MCF 10A (cell line): ENCODE measurements at regions of chr1 and their contacts with region 1.

Region 1: GRCh38 chr1:161201828-161202725 is at the start of gene NDUFS2:
- DNase-seq: peak; percentile 100
- H3K4me3 Mint-ChIP-seq: peak within 1 kb of the TSS; percentile 85
- H3K27ac Mint-ChIP-seq: peak within 1 kb of the TSS; percentile 96
- H3K4me1 Mint-ChIP-seq: peaks cover 66% of the 10 kb centered on the region
- H3K27me3 Mint-ChIP-seq: no peaks in the 10 kb centered on the region
- CTCF ChIP-seq: no peak
- total RNA-seq, gene NDUFS2: 139 and 149 TPM in 2 replicates

Region 2: GRCh38 chr1:160996178-160996577 is 205.9 kb before region 1 on chr1:
- CTCF ChIA-PET with region 1: no interaction called
- POLR2A ChIA-PET with region 1: no interaction called
- intact Hi-C with region 1: no loop called
- DNase-seq: peak; percentile 70
- H3K4me3 Mint-ChIP-seq: no peak overlapping the region
- H3K27ac Mint-ChIP-seq: peak overlapping the region; percentile 70
- H3K4me1 Mint-ChIP-seq: peaks cover 30% of the 10 kb centered on the region
- H3K27me3 Mint-ChIP-seq: no peaks in the 10 kb centered on the region
- CTCF ChIP-seq: no peak

Region 3: DNA sequence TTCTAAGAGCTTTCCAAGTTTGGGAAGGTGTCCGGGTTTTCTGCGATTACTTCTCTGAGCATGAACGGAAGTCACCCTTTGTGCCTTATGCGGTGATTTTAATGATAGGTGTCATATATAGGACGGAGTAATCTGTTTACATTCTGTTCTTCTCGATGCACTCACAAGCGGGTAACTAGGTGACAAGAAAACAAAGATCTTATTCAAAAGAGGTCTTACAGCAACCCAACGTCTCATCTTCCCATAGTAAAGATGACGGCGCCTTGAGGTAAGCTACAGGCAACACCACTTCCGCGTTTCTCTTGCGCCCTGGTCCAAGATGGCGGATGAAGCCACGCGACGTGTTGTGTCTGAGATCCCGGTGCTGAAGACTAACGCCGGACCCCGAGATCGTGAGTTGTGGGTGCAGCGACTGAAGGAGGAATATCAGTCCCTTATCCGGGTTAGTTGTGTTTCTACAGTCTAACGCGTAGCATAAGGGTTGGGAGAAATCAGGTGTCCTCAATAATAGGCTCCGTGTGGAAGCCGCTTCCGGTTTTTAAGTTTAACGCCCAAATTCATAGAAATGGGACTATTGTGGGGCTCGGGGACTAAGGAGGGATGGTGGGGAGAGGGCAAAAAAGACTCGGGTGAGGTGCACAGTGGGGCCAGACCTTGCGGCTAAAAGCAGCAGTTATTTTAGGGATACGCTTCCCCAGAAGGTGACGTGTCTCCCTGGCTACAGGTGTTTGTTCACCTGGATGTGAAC is 48.2 kb before region 1 on chr1 and contains the start of gene UFC1:
- CTCF ChIA-PET with region 1: interaction called, 3 read pairs
- POLR2A ChIA-PET with region 1: interaction called, 20 read pairs
- intact Hi-C with region 1: no loop called
- DNase-seq: peak; percentile 94
- H3K4me3 Mint-ChIP-seq: peak within 1 kb of the TSS; percentile 92
- H3K27ac Mint-ChIP-seq: peak within 1 kb of the TSS; percentile 100
- H3K4me1 Mint-ChIP-seq: peaks cover 18% of the 10 kb centered on the region
- H3K27me3 Mint-ChIP-seq: no peaks in the 10 kb centered on the region
- CTCF ChIP-seq: no peak
- total RNA-seq, gene UFC1: 123 and 125 TPM in 2 replicates

Region 4: GRCh38 chr1:161165742-161166668 is 36.1 kb before region 1 on chr1 and contains the start of gene PPOX:
- CTCF ChIA-PET with region 1: interaction called, 25 read pairs
- POLR2A ChIA-PET with region 1: interaction called, 51 read pairs
- intact Hi-C with region 1: loop called (anchors 2 kb)
- DNase-seq: peak; percentile 100
- H3K4me3 Mint-ChIP-seq: peak within 1 kb of the TSS; percentile 98
- H3K27ac Mint-ChIP-seq: peak within 1 kb of the TSS; percentile 100
- H3K4me1 Mint-ChIP-seq: peaks cover 47% of the 10 kb centered on the region
- H3K27me3 Mint-ChIP-seq: no peaks in the 10 kb centered on the region
- CTCF ChIP-seq: peak; percentile 36
- total RNA-seq, gene PPOX: 30.3 and 32.4 TPM in 2 replicates

Region 5: GRCh38 chr1:161185732-161186311 is 16.3 kb before region 1 on chr1:
- CTCF ChIA-PET with region 1: interaction called, 122 read pairs
- POLR2A ChIA-PET with region 1: interaction called, 58 read pairs
- intact Hi-C with region 1: no loop called
- DNase-seq: no peak
- H3K4me3 Mint-ChIP-seq: no peak overlapping the region
- H3K27ac Mint-ChIP-seq: peak overlapping the region; percentile 36
- H3K4me1 Mint-ChIP-seq: peaks cover 33% of the 10 kb centered on the region
- H3K27me3 Mint-ChIP-seq: no peaks in the 10 kb centered on the region
- CTCF ChIP-seq: no peak

Region 6: GRCh38 chr1:161314201-161314981 is 112.3 kb after region 1 on chr1 and contains the start of gene SDHC:
- CTCF ChIA-PET with region 1: interaction called, 3 read pairs
- POLR2A ChIA-PET with region 1: interaction called, 39 read pairs
- intact Hi-C with region 1: no loop called
- DNase-seq: peak; percentile 87
- H3K4me3 Mint-ChIP-seq: peak within 1 kb of the TSS; percentile 97
- H3K27ac Mint-ChIP-seq: peak within 1 kb of the TSS; percentile 100
- H3K4me1 Mint-ChIP-seq: peaks cover 13% of the 10 kb centered on the region
- H3K27me3 Mint-ChIP-seq: no peaks in the 10 kb centered on the region
- CTCF ChIP-seq: peak; percentile 35
- total RNA-seq, gene SDHC: 204 and 224 TPM in 2 replicates

Region 7: DNA sequence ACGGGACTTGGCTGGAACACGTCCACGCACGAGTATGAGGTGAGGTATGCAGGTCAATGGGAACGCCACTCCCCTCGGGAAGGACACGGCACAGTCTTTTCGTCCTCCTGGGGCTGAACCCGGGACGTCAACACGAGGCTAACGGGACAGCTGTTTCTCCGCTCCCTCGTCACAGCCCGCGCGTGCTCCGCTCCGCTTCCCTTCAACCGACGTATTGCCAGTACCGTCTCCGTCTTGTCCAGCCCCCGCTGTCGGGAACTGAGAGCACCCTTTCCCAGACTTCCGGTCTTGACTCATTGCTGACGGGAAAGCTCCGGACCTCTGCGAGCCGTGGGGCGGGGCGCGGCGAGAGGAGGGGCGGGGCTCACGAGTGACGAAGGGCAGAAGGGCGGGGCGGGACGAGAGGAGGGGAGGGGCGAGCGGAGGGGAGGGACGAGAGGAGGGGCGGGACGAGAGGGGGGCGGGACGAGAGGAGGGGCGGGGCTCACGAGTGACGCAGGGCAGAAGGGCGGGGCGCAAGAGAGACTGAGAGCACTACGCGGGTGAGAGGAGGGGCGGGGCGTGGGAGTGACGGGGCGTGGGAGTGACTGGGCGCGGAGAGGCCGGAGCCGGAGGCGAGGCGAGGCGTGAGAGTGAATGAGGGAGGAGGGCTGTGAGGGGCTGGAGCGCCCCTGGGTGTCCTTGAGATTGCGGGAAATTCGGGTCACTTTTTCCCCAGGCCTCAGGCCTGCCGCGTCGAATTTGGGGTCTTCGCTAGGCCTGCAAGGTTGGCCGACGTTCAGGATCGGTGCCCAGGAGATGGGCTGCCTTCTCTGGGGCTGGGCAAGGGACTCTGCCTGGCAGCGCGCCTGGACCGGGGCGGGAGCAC is 187.8 kb after region 1 on chr1:
- CTCF ChIA-PET with region 1: interaction called, 10 read pairs
- POLR2A ChIA-PET with region 1: interaction called, 43 read pairs
- intact Hi-C with region 1: no loop called
- DNase-seq: peak; percentile 100
- H3K4me3 Mint-ChIP-seq: peak overlapping the region; percentile 88
- H3K27ac Mint-ChIP-seq: peak overlapping the region; percentile 99
- H3K4me1 Mint-ChIP-seq: peaks cover 16% of the 10 kb centered on the region
- H3K27me3 Mint-ChIP-seq: no peaks in the 10 kb centered on the region
- CTCF ChIP-seq: no peak